ENCODE measurements at regions of chr3 and their contacts with region 1.

Region 1: GRCh38 chr3:47601281-47601680 is 22.6 kb upstream of the CSPG5 start:
- DNase-seq: no peak
- ATAC-seq: no peak
- H3K4me3 ChIP-seq: no peak overlapping the region
- H3K4me3 Mint-ChIP-seq: no peak overlapping the region
- H3K27ac ChIP-seq: no peak overlapping the region
- H3K27ac Mint-ChIP-seq: no peak overlapping the region
- H3K4me1 ChIP-seq: no peaks in the 10 kb centered on the region
- H3K4me1 Mint-ChIP-seq: no peaks in the 10 kb centered on the region
- H3K27me3 ChIP-seq: no peaks in the 10 kb centered on the region
- H3K27me3 Mint-ChIP-seq: no peaks in the 10 kb centered on the region
- CTCF ChIP-seq: no peak

Region 2: DNA sequence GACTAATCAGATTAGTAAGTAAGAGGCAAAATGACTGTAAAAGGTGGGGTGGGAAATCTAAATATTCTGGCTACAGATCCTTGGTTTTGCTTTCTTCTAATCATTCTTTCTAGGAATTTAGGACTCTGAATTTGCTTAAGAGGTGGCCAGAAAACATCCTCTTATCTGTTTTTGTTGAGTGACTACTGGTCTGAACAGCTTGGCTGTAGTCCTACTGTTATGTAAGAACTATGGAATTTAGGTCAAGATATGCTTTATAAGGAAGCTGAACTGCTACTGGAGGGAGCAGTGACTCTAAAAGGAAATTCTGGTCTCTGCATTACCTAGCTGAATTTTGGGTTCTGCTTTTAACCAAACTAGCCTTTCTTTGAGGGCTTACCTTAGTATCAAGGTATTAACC is 10.9 kb after region 1 on chr3:
- CTCF ChIA-PET with region 1: no interaction called
- POLR2A ChIA-PET with region 1: no interaction called
- intact Hi-C with region 1: loop called in 1 of 2 experiments (anchors 2 kb)
- DNase-seq: no peak
- ATAC-seq: no peak
- H3K4me3 ChIP-seq: no peak overlapping the region
- H3K4me3 Mint-ChIP-seq: no peak overlapping the region
- H3K27ac ChIP-seq: no peak overlapping the region
- H3K27ac Mint-ChIP-seq: peak overlapping the region; percentile 46
- H3K4me1 ChIP-seq: no peaks in the 10 kb centered on the region
- H3K4me1 Mint-ChIP-seq: no peaks in the 10 kb centered on the region
- H3K27me3 ChIP-seq: no peaks in the 10 kb centered on the region
- H3K27me3 Mint-ChIP-seq: no peaks in the 10 kb centered on the region
- CTCF ChIP-seq: no peak

Region 3: GRCh38 chr3:47722859-47723258 is 121.6 kb after region 1 on chr3:
- CTCF ChIA-PET with region 1: no interaction called
- POLR2A ChIA-PET with region 1: no interaction called
- intact Hi-C with region 1: no loop called
- DNase-seq: no peak
- ATAC-seq: no peak
- H3K4me3 ChIP-seq: no peak overlapping the region
- H3K4me3 Mint-ChIP-seq: no peak overlapping the region
- H3K27ac ChIP-seq: no peak overlapping the region
- H3K27ac Mint-ChIP-seq: peak overlapping the region; percentile 29
- H3K4me1 ChIP-seq: no peaks in the 10 kb centered on the region
- H3K4me1 Mint-ChIP-seq: peaks cover 4% of the 10 kb centered on the region
- H3K27me3 ChIP-seq: no peaks in the 10 kb centered on the region
- H3K27me3 Mint-ChIP-seq: no peaks in the 10 kb centered on the region
- CTCF ChIP-seq: no peak

Region 4: GRCh38 chr3:48898383-48899234 is 1297.3 kb after region 1 on chr3 and contains the start of gene SLC25A20:
- CTCF ChIA-PET with region 1: no interaction called
- POLR2A ChIA-PET with region 1: no interaction called
- intact Hi-C with region 1: no loop called
- DNase-seq: peak; percentile 78 to 94 (median 89)
- ATAC-seq: peak; percentile 96
- H3K4me3 ChIP-seq: peak within 1 kb of the TSS; percentile 90 to 94
- H3K4me3 Mint-ChIP-seq: peak within 1 kb of the TSS; percentile 96
- H3K27ac ChIP-seq: peak within 1 kb of the TSS; percentile 50 to 96
- H3K27ac Mint-ChIP-seq: peak within 1 kb of the TSS; percentile 83
- H3K4me1 ChIP-seq: peaks cover 37% of the 10 kb centered on the region
- H3K4me1 Mint-ChIP-seq: peaks cover 37% of the 10 kb centered on the region
- H3K27me3 ChIP-seq: no peaks in the 10 kb centered on the region
- H3K27me3 Mint-ChIP-seq: no peaks in the 10 kb centered on the region
- CTCF ChIP-seq: no peak
- total RNA-seq, gene SLC25A20: 0.46 to 0.64 TPM